ENCODE measurements at regions of chr1 and their contacts with region 1.

Region 1: DNA sequence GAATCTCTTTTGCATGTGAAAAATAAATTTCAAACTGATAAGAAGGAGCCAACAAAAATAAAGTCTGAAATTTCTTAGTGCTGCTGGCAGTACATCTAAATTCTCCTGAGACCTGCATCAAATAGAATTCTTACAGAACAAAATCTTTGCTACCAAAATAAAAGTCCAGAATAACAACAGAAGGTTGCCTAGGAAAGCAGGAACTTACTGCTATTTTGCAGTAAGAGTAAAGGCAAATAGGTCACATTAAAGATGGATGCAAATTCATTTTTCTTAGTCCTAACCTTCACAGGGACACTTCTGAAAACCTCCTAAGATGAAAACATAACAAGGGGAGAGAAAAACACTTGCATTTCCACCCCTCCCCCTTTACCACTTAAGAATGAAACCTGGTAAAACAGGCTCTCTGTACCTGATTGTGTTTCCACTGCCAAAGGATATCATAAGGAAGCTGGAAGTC is 59.0 kb downstream of the RUSC1 start:
- DNase-seq: no peak
- H3K4me3 ChIP-seq: no peak overlapping the region
- H3K27ac ChIP-seq: no peak overlapping the region
- H3K4me1 ChIP-seq: no peaks in the 10 kb centered on the region
- H3K27me3 ChIP-seq: no peaks in the 10 kb centered on the region
- CTCF ChIP-seq: no peak

Region 2: DNA sequence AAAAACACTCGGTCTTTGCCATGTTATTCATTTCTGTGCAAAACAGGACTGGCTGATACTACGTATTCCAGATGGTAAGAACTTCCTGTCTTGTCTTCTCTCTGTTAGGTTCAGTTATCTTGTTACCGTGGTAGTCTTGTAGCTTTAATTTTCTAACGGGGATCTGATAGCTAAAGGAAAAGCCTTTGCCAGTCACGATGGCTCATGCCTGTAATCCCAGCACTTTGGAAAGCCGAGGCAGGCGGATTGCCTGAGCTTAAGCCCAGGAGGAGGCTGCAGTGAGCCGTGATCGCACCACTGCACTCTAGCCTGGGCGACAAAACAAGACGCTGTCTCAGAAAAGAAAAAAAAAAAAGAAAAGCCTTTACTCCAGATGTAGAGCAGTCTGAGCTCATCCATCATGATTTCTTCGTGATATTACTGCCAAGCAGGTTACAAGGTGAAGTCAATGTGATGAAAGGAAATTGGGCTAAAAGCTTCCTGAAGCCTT is 219.2 kb after region 1 on chr1:
- CTCF ChIA-PET with region 1: no interaction called
- POLR2A ChIA-PET with region 1: no interaction called
- intact Hi-C with region 1: no loop called
- DNase-seq: no peak
- H3K4me3 ChIP-seq: no peak overlapping the region
- H3K27ac ChIP-seq: no peak overlapping the region
- H3K4me1 ChIP-seq: no peaks in the 10 kb centered on the region
- H3K27me3 ChIP-seq: no peaks in the 10 kb centered on the region
- CTCF ChIP-seq: no peak

Region 3: DNA sequence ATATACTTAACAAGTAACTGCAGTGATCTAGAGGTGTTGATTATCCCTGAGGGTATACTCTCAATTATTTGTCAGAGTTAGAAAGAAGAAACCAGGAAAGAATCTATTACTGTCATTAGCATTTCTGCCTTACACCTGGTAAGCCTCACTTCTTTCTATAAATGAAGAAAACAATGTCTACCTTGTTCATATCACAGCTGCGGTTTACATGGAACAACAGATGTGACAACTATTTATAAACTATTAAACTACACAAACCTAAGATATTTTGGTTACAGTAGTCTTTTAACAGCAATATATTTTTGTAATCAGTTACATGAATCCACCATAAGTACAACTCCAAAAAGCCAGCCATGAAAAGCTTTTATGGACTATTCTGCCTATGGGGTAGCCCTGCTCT is 436.7 kb after region 1 on chr1:
- CTCF ChIA-PET with region 1: no interaction called
- POLR2A ChIA-PET with region 1: interaction called, 12 read pairs
- intact Hi-C with region 1: no loop called
- DNase-seq: no peak
- H3K4me3 ChIP-seq: no peak overlapping the region
- H3K27ac ChIP-seq: no peak overlapping the region
- H3K4me1 ChIP-seq: no peaks in the 10 kb centered on the region
- H3K27me3 ChIP-seq: no peaks in the 10 kb centered on the region
- CTCF ChIP-seq: no peak

Measured in PC-9 (cell line).